HepG2 (cell line): ENCODE measurements at regions of chr2 and their contacts with region 1.

Region 1: GRCh38 chr2:71000780-71001591 is 6.3 kb upstream of the TEX261 start:
- DNase-seq: peak; percentile 65
- ATAC-seq: peak; percentile 78
- H3K4me3 ChIP-seq: peak overlapping the region; percentile 53 to 81 (median 71)
- H3K27ac ChIP-seq: no peak overlapping the region
- H3K4me1 ChIP-seq: peaks cover 55% of the 10 kb centered on the region
- H3K27me3 ChIP-seq: peaks cover 0 to 9% of the 10 kb centered on the region in 2 experiments; a peak in 2 of 5 replicates
- CTCF ChIP-seq: peak; percentile 99
- EP300 ChIP-seq: no peak
- POLR2A ChIP-seq: peak in 1 of 2 experiments; percentile 74; a peak in 2 of 4 replicates
- RAD21 ChIP-seq: peak; percentile 51

Region 2: DNA sequence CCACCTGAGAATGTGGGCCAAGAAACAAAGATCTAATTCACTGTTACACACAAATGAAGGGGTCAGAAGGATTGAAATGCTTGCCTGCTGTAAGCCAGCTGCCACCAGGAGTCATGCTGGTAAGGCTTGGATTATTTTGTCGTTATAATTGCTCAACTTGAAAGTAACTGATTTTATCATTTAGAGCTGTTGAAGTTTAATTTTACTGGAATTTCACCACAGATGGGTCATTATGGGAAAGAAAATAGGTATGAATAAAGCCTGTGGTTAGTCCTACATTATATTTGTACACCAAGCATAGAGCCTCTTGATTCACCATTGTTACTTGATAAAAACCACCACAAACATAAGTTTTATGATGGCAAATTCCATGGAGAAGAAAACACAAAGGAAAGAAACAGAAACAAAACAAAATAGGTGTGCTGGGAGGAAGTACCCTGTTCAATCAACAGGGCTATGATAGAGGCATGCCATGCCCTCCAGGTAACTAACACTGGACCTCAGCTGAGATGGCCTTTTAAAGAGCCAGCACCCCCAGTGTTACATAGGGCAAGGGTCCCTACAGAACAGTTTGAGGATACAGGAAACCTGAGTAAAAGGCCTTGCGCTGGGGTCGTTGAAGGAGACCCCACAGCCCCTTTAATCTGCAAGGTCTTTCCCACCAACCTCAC is 183.6 kb before region 1 on chr2:
- CTCF ChIA-PET with region 1: no interaction called
- POLR2A ChIA-PET with region 1: no interaction called
- in situ Hi-C with region 1: no loop called
- intact Hi-C with region 1: no loop called
- DNase-seq: no peak
- ATAC-seq: no peak
- H3K4me3 ChIP-seq: no peak overlapping the region
- H3K27ac ChIP-seq: no peak overlapping the region
- H3K4me1 ChIP-seq: peaks cover 47% of the 10 kb centered on the region
- H3K27me3 ChIP-seq: peaks cover 2 to 14% of the 10 kb centered on the region in 2 experiments; a peak in 3 of 5 replicates
- CTCF ChIP-seq: no peak
- EP300 ChIP-seq: no peak
- POLR2A ChIP-seq: no peak
- RAD21 ChIP-seq: no peak

Region 3: GRCh38 chr2:71018625-71019024 is 17.6 kb after region 1 on chr2:
- CTCF ChIA-PET with region 1: no interaction called
- POLR2A ChIA-PET with region 1: interaction called, 11 read pairs
- in situ Hi-C with region 1: no loop called
- intact Hi-C with region 1: no loop called
- DNase-seq: no peak
- ATAC-seq: no peak
- H3K4me3 ChIP-seq: no peak overlapping the region
- H3K27ac ChIP-seq: no peak overlapping the region
- H3K4me1 ChIP-seq: peaks cover 16% of the 10 kb centered on the region
- H3K27me3 ChIP-seq: 0 out of 5 replicates have a peak, but pooled peaks cover 0 to 4% of the 10 kb centered on the region in 2 experiments
- CTCF ChIP-seq: no peak
- EP300 ChIP-seq: no peak
- POLR2A ChIP-seq: no peak
- RAD21 ChIP-seq: no peak

Region 4: DNA sequence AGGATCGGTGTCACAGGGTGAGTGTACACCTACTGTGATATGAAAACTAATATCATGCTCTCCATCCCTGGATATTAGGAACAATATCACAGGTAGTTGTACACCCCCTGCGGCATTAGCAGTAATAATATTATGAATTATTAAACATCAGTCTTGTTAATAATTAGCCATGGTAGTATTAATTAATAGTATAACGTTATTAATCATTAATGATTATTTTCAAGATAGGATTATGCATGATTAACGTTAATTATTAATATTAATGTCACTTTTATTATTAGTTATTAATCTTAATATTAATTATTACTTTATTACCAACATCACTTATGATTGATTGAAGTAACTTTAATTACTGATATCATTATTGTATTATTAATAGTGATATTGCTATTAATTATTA is 41.3 kb after region 1 on chr2:
- CTCF ChIA-PET with region 1: no interaction called
- POLR2A ChIA-PET with region 1: no interaction called
- in situ Hi-C with region 1: no loop called
- intact Hi-C with region 1: no loop called
- DNase-seq: no peak
- ATAC-seq: no peak
- H3K4me3 ChIP-seq: no peak overlapping the region
- H3K27ac ChIP-seq: no peak overlapping the region
- H3K4me1 ChIP-seq: no peaks in the 10 kb centered on the region
- H3K27me3 ChIP-seq: peaks cover 0 to 29% of the 10 kb centered on the region in 2 experiments; a peak in 3 of 5 replicates
- CTCF ChIP-seq: no peak
- EP300 ChIP-seq: no peak
- POLR2A ChIP-seq: no peak
- RAD21 ChIP-seq: no peak

Region 5: GRCh38 chr2:71078624-71079023 is 77.6 kb after region 1 on chr2:
- CTCF ChIA-PET with region 1: no interaction called
- POLR2A ChIA-PET with region 1: no interaction called
- in situ Hi-C with region 1: no loop called
- intact Hi-C with region 1: no loop called
- DNase-seq: no peak
- ATAC-seq: no peak
- H3K4me3 ChIP-seq: no peak overlapping the region
- H3K27ac ChIP-seq: no peak overlapping the region
- H3K4me1 ChIP-seq: no peaks in the 10 kb centered on the region
- H3K27me3 ChIP-seq: no peaks in the 10 kb centered on the region
- CTCF ChIP-seq: no peak
- EP300 ChIP-seq: no peak
- POLR2A ChIP-seq: no peak
- RAD21 ChIP-seq: no peak